Head of caudate nucleus (tissue), 42 donors: ENCODE measurements at regions of chr9 and their contacts with region 1.

Region 1: GRCh38 chr9:4404156-4404555 is 86.1 kb upstream of the SLC1A1 start:
- DNase-seq: no peak

Region 2: DNA sequence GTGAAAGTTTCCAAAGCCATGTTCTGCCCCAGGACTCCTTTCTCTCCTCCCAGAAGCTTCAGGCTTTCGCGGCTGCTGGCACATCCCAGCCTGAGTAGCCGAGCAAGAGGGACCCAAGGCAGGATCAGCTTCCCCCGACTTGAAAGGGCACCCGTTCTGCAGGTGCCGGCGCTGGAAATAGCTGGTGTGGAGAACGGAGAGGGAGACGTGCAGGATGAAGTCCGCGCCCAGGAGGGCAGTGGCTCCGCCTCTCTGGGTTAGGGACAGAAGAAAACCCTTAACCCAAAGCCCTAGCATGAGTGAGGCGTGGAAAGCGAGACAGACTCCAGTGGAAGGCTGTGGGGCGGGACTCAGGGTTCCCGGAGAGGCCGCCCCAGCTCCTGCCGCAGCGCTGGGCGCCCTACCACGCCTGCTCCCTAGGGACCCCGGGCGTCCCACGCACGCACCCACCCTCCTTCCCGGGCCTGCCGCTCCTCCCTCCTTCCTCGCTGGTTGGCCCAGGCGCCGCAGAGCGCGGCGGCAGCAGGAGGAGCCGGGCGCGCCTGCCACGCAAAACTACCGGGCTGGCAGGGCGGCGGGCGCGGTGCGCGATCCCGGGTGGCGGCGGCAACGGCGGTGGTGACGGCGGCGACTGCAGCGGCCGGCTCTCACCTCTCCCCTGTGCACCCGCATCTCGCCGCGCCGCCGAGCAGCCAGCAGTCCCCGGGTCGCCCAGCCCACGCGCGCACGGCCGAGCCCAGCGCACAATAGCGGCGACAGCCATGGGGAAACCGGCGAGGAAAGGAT is 86.0 kb after region 1 on chr9 and contains the start of gene SLC1A1:
- intact Hi-C with region 1: loop called (anchors 10 kb)
- DNase-seq: peak; percentile 12 to 91 (median 75)